ENCODE measurements at regions of chr9 and their contacts with region 1.

Region 1: DNA sequence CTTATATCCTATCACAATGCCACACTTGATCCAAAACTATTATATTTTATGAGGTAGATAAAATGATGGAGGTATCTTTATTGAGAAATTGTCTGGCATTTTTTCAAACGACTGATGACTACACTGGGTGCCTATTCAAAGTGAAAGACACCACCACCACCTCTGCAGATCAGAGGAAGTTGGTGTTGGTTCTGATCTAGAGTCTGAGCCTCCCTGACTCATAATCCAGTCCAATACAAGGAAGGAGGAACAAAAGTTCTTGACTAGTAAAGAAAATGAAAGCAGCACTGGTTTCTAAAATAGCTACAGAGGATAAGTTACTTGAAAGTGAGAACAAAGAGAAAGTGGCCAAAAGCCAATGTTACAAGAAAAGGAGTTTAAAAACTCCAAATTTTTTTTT is 139.9 kb downstream of the RFX3 start:
- DNase-seq: peak; percentile 19
- H3K4me3 Mint-ChIP-seq: no peak overlapping the region
- H3K27ac Mint-ChIP-seq: peak overlapping the region; percentile 64
- H3K4me1 Mint-ChIP-seq: peaks cover 28% of the 10 kb centered on the region
- H3K27me3 Mint-ChIP-seq: no peaks in the 10 kb centered on the region

Region 2: DNA sequence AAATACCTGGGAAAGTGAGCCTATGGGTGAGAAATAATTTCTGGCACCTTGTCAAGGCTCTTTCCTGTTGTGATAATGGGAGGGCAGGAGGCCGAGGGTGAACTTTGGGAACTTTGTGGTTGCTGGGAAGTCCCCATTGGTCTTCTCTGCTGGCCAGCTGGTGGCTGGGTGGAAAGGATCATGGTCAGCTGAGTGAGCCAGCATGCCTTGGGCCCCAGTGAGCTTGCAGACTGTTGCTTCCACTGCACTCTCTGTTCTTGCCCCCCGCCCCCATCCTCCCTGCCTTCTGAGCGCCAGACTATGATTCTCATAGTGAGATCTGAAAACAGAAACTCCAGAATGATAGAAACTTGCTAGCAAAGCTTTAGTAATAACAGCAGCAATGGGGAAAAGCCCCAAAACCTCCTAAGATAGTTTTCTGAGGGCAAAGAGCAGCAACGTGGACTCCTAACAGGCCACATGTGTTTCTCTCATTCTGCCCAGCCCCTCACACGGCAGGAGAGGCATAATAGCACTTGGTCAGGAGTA is 1509.9 kb before region 1 on chr9:
- intact Hi-C with region 1: loop called (anchors 5 kb)
- DNase-seq: peak; percentile 20
- H3K4me3 Mint-ChIP-seq: no peak overlapping the region
- H3K27ac Mint-ChIP-seq: peak overlapping the region; percentile 83
- H3K4me1 Mint-ChIP-seq: peaks cover 28% of the 10 kb centered on the region
- H3K27me3 Mint-ChIP-seq: peaks cover 22% of the 10 kb centered on the region

Region 3: GRCh38 chr9:2837915-2838314 is 548.0 kb before region 1 on chr9:
- intact Hi-C with region 1: loop called (anchors 5 kb)
- DNase-seq: no peak
- H3K4me3 Mint-ChIP-seq: no peak overlapping the region
- H3K27ac Mint-ChIP-seq: no peak overlapping the region
- H3K4me1 Mint-ChIP-seq: peaks cover 30% of the 10 kb centered on the region
- H3K27me3 Mint-ChIP-seq: no peaks in the 10 kb centered on the region

Region 4: GRCh38 chr9:3299872-3300271 is 86.0 kb before region 1 on chr9:
- intact Hi-C with region 1: loop called (anchors 5 kb)
- DNase-seq: no peak
- H3K4me3 Mint-ChIP-seq: no peak overlapping the region
- H3K27ac Mint-ChIP-seq: no peak overlapping the region
- H3K4me1 Mint-ChIP-seq: peaks cover 6% of the 10 kb centered on the region
- H3K27me3 Mint-ChIP-seq: no peaks in the 10 kb centered on the region

Region 5: GRCh38 chr9:3478549-3478953 is 92.7 kb after region 1 on chr9:
- intact Hi-C with region 1: loop called (anchors 1 kb)
- DNase-seq: no peak
- H3K4me3 Mint-ChIP-seq: peak overlapping the region; percentile 35
- H3K27ac Mint-ChIP-seq: peak overlapping the region; percentile 82
- H3K4me1 Mint-ChIP-seq: peaks cover 77% of the 10 kb centered on the region
- H3K27me3 Mint-ChIP-seq: no peaks in the 10 kb centered on the region

Region 6: DNA sequence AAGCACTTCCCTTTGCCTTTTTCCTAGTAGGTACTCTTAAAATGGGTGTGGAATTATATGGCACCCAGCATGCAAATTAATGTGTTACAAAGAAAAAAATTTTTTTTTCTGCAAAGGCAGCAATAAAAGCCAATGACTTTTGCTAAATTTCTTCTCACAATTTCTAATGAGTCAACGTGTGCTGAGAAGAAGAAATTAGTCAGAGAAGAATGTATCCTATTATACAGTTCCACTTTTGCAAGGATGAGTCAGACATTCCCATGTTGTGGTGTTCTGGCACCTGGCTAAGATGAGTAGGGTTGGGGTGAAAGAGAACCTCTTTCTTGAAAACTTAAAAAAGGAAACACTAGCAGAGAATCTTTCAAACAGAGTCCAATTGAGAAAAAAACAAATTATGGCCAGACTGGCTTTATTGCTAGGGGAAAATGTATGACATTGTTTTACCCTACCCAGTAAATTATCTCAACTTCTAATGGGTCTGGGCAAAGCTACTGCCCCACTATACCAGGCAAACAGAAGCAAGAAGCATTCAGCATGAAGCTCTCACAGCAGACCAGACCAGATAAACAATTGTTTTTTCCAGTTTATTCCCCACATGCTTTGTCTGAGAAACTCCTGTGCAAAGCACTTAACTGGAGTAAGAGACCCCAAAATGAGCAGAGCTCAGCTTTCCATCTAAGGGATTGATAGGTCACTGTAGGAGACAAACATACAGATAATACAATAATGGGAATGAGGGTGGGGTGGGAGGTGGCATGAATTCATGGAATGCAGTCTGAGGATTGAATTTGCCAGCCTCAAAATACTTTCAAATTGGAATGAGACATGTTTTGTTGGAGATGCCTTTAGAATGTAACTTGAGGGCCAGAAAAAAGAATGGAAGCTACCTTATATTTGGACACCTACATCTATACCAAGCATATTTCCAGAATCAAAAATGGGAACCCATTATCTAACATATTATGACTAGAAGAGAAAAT is 360.7 kb after region 1 on chr9:
- intact Hi-C with region 1: loop called (anchors 5 kb)
- DNase-seq: no peak
- H3K4me3 Mint-ChIP-seq: peak overlapping the region; percentile 4
- H3K27ac Mint-ChIP-seq: peak overlapping the region; percentile 83
- H3K4me1 Mint-ChIP-seq: peaks cover 41% of the 10 kb centered on the region
- H3K27me3 Mint-ChIP-seq: no peaks in the 10 kb centered on the region

Region 7: DNA sequence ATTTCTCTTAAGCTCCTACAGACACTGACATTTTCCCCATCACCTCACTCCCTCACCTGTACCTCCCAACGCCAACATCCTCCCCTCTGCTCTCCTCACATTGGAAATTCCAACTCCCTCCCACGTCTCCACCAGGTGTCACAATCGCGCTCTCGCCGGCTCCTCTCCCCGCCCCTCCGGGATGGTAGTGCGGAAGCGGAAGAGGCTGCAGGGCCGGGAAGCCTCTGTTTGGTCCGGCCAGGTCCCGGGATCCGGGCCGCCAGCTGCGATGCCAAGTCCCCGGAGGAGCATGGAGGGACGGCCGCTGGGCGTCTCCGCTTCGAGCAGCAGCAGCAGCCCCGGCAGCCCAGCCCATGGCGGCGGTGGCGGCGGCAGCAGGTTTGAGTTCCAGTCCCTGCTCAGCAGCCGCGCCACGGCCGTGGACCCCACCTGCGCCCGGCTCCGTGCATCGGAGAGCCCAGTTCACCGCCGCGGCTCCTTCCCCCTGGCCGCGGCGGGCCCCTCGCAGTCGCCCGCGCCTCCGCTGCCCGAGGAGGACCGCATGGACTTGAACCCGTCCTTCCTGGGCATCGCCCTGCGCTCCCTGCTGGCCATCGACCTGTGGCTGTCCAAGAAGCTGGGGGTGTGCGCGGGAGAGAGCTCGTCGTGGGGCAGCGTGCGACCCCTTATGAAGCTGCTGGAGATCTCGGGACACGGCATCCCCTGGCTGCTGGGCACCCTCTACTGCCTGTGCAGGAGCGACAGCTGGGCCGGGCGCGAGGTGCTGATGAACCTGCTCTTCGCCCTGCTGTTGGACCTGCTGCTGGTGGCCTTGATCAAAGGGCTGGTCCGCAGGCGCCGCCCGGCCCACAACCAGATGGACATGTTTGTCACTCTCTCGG is 1276.5 kb after region 1 on chr9 and contains the start of gene PLPP6:
- intact Hi-C with region 1: loop called (anchors 10 kb)
- DNase-seq: peak; percentile 73
- H3K4me3 Mint-ChIP-seq: peak within 1 kb of the TSS; percentile 89
- H3K27ac Mint-ChIP-seq: peak within 1 kb of the TSS; percentile 88
- H3K4me1 Mint-ChIP-seq: peaks cover 59% of the 10 kb centered on the region
- H3K27me3 Mint-ChIP-seq: peaks cover 15% of the 10 kb centered on the region
- total RNA-seq, gene PLPP6: 5.3 and 5.7 TPM in 2 replicates

Measured in activated T-helper 1 cell treated with anti-CD3 and anti-CD28 coated beads, Interleukin-12 subunit alpha, Interleukin-12 subunit beta, Interleukin-2, Interleukin-4 antibody, amounts not matched to agents 30 ng/mL and 10 ng/mL and 1 ng/mL, durations not matched to agents 14 hours and 24 hours and 36 hours (primary cell).